K562 (cell line): ENCODE measurements at regions of chr6 and their contacts with region 1.

Region 1: DNA sequence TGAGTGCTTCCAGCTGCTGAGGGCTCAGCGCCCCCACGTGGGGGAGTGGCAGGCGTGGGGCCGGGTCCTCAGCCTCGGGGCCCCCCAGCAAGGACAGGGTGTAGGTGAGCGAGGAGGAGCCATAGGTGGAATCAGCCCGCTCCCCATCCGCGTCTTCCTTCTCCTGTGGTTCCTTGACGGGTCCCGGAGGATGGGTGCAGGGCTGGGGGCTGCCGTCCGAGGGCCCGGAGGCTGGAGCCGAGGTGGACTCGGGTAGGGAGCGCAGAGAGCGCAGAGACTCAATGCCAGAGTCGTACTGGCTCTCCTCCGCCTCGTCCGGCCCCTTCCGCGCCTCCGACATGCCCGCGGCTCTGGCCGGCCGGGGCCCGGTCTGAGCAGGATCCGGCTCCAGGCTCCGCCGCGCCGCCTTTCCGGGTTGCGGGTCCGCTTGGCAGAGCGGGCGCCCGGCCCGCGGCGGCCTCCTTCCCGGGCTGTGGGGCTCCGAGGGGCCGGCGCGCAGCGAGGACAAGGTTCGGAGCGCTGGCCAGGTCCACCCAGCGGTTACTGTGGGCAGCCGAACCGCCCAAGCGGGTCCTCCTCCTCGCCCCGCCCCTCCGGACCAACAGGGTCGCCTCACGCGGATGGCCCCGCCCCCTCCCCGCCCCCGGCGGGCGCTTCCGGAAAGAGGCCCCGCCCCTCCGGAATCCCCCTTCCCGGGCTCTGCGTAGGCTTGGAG is at the start of gene NFKBIE:
- DNase-seq: peak; percentile 95 to 99 (median 99)
- ATAC-seq: peak; percentile 84
- H3K4me3 ChIP-seq: peak within 1 kb of the TSS; percentile 83
- H3K27ac ChIP-seq: peak within 1 kb of the TSS; percentile 74
- H3K4me1 ChIP-seq: peaks cover 19 to 31% of the 10 kb centered on the region in 2 experiments; a peak in 4 of 5 replicates
- H3K27me3 ChIP-seq: peaks cover 16 to 17% of the 10 kb centered on the region in 2 experiments
- CTCF ChIP-seq: peak; percentile 62 to 74 (median 65)
- EP300 ChIP-seq: no peak
- POLR2A ChIP-seq: peak; percentile 70
- RAD21 ChIP-seq: peak; percentile 23 to 75; a peak in 2 of 4 replicates
- polyA plus RNA-seq, gene NFKBIE: 2.1 to 2.9 TPM

Region 2: DNA sequence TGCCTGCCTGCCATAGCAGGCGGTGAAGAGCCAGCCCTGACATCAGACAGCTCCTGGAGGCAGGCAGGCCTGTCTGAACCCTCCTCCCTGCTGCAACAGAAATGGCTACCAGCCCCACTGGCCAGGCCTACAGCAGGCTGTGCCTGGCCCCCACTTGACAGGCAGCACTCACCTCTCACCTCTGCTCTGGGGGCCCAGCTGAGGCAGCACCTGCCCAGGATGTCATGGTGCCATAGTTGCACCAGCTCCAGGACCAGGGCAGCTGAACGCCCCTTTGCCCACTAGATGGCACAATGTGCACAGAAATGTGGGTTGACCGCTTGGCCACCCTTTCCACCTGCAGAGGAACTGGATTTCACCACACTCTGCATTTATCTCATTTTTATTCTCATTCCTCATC is 168.6 kb before region 1 on chr6:
- CTCF ChIA-PET with region 1: interaction called, 3 read pairs
- POLR2A ChIA-PET with region 1: interaction called, 3 read pairs
- in situ Hi-C with region 1: no loop called
- intact Hi-C with region 1: loop called (anchors 5 kb)
- DNase-seq: peak; percentile 56 to 73 (median 64)
- ATAC-seq: peak; percentile 84
- H3K4me3 ChIP-seq: no peak overlapping the region
- H3K27ac ChIP-seq: no peak overlapping the region
- H3K4me1 ChIP-seq: peaks cover 0 to 4% of the 10 kb centered on the region in 2 experiments; a peak in 3 of 5 replicates
- H3K27me3 ChIP-seq: no peaks in the 10 kb centered on the region
- CTCF ChIP-seq: peak; percentile 81 to 82 (median 81)
- EP300 ChIP-seq: no peak
- POLR2A ChIP-seq: no peak
- RAD21 ChIP-seq: peak; percentile 64 to 75

Region 3: DNA sequence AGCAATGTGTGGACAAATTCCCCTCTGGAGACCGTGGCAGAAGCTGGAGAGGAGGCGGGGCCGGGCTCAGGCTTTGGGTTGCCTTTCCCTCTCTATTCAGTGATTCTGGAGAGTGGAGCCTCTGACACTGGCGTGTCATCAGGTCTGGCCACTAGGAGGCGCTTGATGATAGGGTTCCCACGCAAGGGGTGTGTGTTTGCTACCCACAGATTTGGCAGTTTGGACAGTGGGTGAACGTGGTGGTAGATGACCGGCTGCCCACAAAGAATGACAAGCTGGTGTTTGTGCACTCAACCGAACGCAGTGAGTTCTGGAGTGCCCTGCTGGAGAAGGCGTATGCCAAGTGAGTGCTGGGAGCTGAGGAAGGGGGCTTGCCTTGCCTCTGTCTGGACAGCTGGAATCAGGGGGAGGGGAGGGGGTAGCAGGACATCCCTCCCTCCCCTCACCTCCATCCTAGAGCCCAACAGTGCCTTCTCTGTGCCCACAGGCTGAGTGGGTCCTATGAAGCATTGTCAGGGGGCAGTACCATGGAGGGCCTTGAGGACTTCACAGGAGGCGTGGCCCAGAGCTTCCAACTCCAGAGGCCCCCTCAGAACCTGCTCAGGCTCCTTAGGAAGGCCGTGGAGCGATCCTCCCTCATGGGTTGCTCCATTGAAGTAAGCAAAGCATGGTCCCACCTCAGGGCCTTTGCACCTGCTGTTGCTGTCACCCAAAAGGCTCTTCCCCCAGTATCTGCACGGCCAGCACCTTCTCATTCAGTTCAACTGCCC is 92.2 kb before region 1 on chr6:
- CTCF ChIA-PET with region 1: no interaction called
- POLR2A ChIA-PET with region 1: interaction called, 3 read pairs
- in situ Hi-C with region 1: no loop called
- intact Hi-C with region 1: loop called (anchors 1 kb)
- DNase-seq: peak; percentile 90 to 94 (median 92)
- ATAC-seq: peak; percentile 98
- H3K4me3 ChIP-seq: no peak overlapping the region
- H3K27ac ChIP-seq: no peak overlapping the region
- H3K4me1 ChIP-seq: peaks cover 2 to 25% of the 10 kb centered on the region in 2 experiments; a peak in 3 of 5 replicates
- H3K27me3 ChIP-seq: peaks cover 2 to 21% of the 10 kb centered on the region in 2 experiments; a peak in 2 of 5 replicates
- CTCF ChIP-seq: peak; percentile 96 to 99 (median 98)
- EP300 ChIP-seq: no peak; the same call in 1 of the 2 replicates
- POLR2A ChIP-seq: no peak
- RAD21 ChIP-seq: peak; percentile 97 to 99

Region 4: DNA sequence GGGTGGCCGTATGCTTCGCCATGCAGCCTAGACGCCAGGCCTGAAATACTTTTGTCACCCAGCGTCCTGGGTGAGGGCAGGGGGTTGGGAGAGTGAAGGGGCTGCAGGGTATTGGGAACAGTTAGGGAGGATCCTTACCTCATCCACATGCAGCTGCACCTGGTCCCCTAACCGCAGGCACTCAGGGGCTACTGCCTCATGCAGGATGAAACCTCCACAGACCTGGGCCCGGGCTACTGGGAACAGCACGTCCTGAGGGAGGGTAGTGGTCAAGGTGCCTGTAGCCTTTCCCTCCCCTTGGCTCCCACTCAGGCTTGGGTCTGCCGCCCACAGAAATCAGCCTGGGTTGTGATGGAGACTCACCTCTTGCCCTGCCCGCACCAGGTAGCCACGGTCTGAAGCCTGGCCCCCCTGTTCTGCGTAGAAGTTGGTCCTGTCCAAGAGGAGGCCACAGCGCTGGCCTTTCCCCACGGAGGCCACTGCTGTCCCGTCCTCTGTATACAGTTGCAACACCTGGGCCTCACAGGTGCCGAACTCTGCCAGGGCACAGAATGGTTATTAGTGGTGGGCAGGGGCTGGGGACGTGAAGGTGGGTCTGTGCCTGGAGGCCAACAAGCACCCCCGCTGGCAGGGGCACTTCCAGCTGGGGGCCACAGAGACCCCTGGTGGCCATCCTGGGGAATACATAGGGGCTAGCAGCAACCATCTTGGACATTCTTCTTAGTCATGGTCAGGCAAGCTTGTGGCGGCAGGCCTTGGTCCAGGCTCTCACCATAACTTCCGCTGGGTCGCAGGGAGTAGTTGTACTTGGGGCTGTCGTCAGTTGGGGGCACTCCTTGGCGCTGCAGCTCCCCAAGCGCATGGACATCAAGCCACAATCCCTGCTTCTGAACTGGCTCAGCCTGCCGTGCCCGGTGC is 39.4 kb after region 1 on chr6:
- CTCF ChIA-PET with region 1: interaction called, 7 read pairs
- POLR2A ChIA-PET with region 1: interaction called, 4 read pairs
- in situ Hi-C with region 1: no loop called
- intact Hi-C with region 1: loop called (anchors 1 kb)
- DNase-seq: peak; percentile 75 to 86 (median 80)
- ATAC-seq: peak; percentile 93
- H3K4me3 ChIP-seq: no peak overlapping the region
- H3K27ac ChIP-seq: peak overlapping the region; percentile 62; the same call in 2 of the 3 replicates
- H3K4me1 ChIP-seq: peaks cover 2 to 17% of the 10 kb centered on the region in 2 experiments; a peak in 3 of 5 replicates
- H3K27me3 ChIP-seq: no peaks in the 10 kb centered on the region
- CTCF ChIP-seq: peak; percentile 88 to 94 (median 90)
- EP300 ChIP-seq: no peak
- POLR2A ChIP-seq: no peak
- RAD21 ChIP-seq: peak; percentile 48 to 59

Region 5: DNA sequence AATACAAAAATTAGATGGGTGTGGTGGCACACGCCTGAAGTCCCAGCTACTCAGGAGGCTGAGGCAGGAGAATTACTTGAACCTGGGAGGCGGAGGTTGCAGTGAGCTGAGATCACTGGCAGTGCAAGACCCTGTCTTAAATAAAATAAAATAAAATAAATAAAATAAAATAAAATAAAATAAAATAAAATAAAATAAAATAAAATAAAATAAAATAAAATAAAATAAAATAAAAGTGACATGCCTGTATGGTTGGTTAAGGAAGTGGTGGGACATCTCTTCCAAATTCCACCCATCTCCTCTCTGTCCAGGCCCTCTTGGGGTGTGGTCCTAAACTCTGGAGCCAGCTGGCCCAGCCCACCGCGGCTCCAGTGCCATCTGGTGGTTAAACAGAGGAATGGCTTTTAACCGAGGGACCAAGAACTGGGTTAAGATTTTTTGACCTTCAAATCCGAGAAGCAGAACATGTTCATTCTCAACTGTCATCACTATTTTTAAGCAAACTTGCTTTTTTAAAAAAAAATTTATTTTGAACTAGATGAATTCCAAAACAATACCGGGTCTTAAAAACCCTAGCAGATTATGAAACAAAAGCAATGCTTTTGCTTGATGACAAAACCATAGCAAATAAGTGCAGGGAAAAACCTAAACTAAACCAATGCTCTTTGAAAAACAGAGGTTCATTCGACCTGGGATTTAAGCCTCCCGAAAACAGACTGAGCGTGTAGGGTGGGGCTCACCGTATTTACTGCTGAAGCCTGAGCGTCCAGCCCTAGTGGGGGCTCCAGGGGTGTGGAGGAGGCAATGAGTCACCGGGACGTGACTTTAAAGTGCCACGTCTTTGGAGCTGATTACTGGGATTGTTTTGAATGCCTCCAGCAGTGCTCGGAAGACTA is 191.2 kb after region 1 on chr6:
- CTCF ChIA-PET with region 1: interaction called, 5 read pairs
- POLR2A ChIA-PET with region 1: interaction called, 3 read pairs
- in situ Hi-C with region 1: no loop called
- intact Hi-C with region 1: loop called (anchors 2 kb)
- DNase-seq: peak; percentile 82 to 86 (median 84)
- ATAC-seq: peak; percentile 91
- H3K4me3 ChIP-seq: peak overlapping the region; percentile 17
- H3K27ac ChIP-seq: peak overlapping the region; percentile 26; the same call in 1 of the 3 replicates
- H3K4me1 ChIP-seq: peaks cover 8 to 18% of the 10 kb centered on the region in 2 experiments; a peak in 4 of 5 replicates
- H3K27me3 ChIP-seq: peaks cover 0 to 3% of the 10 kb centered on the region in 2 experiments; a peak in 1 of 5 replicates
- CTCF ChIP-seq: peak; percentile 88 to 96 (median 91)
- EP300 ChIP-seq: no peak
- POLR2A ChIP-seq: no peak
- RAD21 ChIP-seq: peak; percentile 78 to 86